Activated naive CD4-positive, alpha-beta T cell treated with anti-CD3 and anti-CD28 coated beads, Interleukin-2, amount 10 ng/mL, durations not matched to agents 7 days and 5 days (primary cell): ENCODE measurements at regions of chr16 and their contacts with region 1.

Region 1: DNA sequence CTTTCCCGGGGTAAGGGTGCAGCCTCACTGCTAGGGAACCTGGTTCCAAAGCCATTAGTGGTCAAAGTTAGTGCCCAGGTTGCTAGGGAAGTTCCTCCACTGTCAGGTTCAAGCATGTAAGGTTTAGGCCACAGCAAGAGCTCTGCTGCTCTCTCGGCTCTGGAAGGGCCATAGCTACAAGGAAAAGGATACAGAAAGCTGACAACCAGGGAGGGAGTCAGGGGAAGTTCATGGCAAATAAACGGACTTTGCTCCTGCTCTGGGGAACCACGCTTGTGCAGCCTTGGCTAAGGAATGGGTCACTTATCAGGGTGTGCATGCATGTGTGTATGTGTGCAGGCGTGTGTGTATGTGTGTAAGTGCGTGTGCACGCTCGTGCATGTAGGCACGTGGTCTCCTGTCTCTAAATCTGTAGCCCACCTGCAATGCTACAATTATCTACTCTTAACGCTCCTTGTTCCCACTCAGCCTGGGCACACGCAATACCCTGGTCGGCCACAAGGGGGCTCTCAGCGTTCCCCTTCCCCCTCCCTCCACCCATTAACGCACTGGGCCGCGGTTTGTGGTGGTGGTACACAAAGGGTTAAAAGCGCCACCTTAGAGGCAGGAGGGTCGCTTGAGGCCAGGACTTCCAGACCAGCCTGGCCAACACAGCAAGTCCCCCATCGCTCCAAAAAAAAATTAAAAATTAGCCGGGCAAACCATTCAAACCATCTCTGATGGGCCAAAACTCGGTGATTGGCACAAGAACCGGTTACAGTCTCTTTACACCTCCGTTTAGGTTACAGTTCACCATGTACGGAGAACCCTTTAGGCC is 48.4 kb upstream of the KDM8 start:
- DNase-seq: peak; percentile 76
- H3K4me3 Mint-ChIP-seq: no peak overlapping the region
- H3K27ac Mint-ChIP-seq: no peak overlapping the region
- H3K4me1 Mint-ChIP-seq: peaks cover 16% of the 10 kb centered on the region
- H3K27me3 Mint-ChIP-seq: peaks cover 5% of the 10 kb centered on the region

Region 2: DNA sequence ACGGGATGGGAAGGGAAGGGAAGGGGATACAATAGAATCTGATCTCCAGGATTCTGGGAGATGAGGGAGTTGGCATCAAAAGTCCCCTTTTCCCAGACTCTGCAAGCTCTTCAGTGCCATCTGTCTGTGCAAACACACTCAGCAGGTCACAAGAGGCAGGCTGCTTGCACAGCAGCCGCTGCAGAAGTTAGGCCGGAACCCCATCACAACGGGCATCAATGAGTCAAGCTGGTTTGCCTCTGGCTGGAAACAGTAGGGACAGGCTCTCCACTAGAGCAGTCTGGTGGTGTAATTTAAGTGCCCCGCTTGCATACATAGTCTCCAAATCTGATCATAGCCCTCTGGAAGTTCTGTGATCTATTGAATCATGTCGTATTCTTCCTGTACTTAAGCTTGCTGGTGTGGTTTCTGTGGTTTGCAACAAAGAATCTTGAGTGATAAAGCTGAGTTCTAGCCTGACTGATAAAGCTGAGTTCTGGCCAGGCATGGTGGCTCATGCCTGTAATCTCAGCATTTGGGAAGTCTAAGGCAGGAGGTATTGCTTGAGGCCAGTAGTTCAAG is 14.7 kb after region 1 on chr16:
- CTCF ChIA-PET with region 1: interaction called, 41 read pairs
- DNase-seq: peak; percentile 83
- H3K4me3 Mint-ChIP-seq: peak overlapping the region; percentile 20
- H3K27ac Mint-ChIP-seq: peak overlapping the region; percentile 84
- H3K4me1 Mint-ChIP-seq: peaks cover 68% of the 10 kb centered on the region
- H3K27me3 Mint-ChIP-seq: peaks cover 6% of the 10 kb centered on the region